Gastrocnemius medialis (tissue), 4 donors: ENCODE measurements at regions of chr11 and their contacts with region 1.

Region 1: GRCh38 chr11:128279866-128280265 is 307.5 kb downstream of the ETS1 start:
- DNase-seq: no peak
- ATAC-seq: peak; percentile 24 to 47
- H3K4me3 ChIP-seq: no peak overlapping the region
- H3K27ac ChIP-seq: no peak overlapping the region
- H3K4me1 ChIP-seq: no peaks in the 10 kb centered on the region
- H3K27me3 ChIP-seq: no peaks in the 10 kb centered on the region
- CTCF ChIP-seq: no peak
- POLR2A ChIP-seq: no peak

Region 2: GRCh38 chr11:128195057-128195751 is 84.7 kb before region 1 on chr11:
- in situ Hi-C with region 1: no loop called
- intact Hi-C with region 1: loop called (anchors 10 kb)
- DNase-seq: no peak
- ATAC-seq: no peak
- H3K4me3 ChIP-seq: no peak overlapping the region
- H3K27ac ChIP-seq: no peak overlapping the region
- H3K4me1 ChIP-seq: peaks cover 0 to 10% of the 10 kb centered on the region in 2 donors
- H3K27me3 ChIP-seq: no peaks in the 10 kb centered on the region
- CTCF ChIP-seq: no peak
- POLR2A ChIP-seq: no peak

Region 3: GRCh38 chr11:128323381-128323780 is 43.5 kb after region 1 on chr11:
- in situ Hi-C with region 1: no loop called
- intact Hi-C with region 1: no loop called
- DNase-seq: no peak
- ATAC-seq: no peak
- H3K4me3 ChIP-seq: no peak overlapping the region
- H3K27ac ChIP-seq: no peak overlapping the region
- H3K4me1 ChIP-seq: peaks cover 0 to under 1% of the 10 kb centered on the region in 2 donors
- H3K27me3 ChIP-seq: no peaks in the 10 kb centered on the region
- CTCF ChIP-seq: no peak
- POLR2A ChIP-seq: no peak